Heart left ventricle (tissue), 16 donors: ENCODE measurements at regions of chr6 and their contacts with region 1.

Region 1: GRCh38 chr6:39791850-39792539 is at the start of gene DAAM2:
- DNase-seq: peak; percentile 71 to 85 (median 74)
- ATAC-seq: peak; percentile 63 to 92 (median 87)
- H3K4me3 ChIP-seq: peak within 1 kb of the TSS; percentile 43 to 84 (median 66)
- H3K27ac ChIP-seq: peak within 1 kb of the TSS in 11 of 12 donors; percentile 35 to 86 (median 78)
- H3K4me1 ChIP-seq: peaks cover 0 to 38% (median 11%) of the 10 kb centered on the region in 12 donors
- H3K27me3 ChIP-seq: peaks cover 0 to 23% (median 0%) of the 10 kb centered on the region in 9 donors
- CTCF ChIP-seq: peak in 5 of 12 donors; percentile 7 to 47 (median 27)
- POLR2A ChIP-seq: peak in 1 of 2 donors; percentile 74
- total RNA-seq, gene DAAM2: 11.5 to 20.9 (median 13.6) TPM

Region 2: DNA sequence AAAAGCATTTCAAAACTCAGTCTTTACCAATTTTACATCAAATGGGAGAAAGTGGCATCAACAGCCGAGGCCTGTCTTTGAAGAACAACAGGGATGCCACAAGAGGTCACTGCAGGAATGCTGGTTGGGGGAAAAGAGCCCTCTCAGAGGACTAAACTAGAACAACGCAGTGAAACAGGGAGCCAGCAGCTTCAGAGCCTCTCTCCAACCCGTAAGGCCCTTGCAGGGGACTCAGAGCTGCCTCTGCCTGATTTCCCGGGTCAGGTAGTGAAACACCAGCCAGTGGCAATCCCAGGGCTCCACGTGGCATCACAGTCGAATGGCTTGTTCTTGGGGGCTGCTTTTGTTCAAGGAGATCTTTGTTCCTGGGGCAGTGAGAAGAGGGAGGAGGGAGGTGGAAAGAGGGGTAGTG is 414.4 kb before region 1 on chr6:
- intact Hi-C with region 1: loop called in 1 of 10 experiments (anchors 10 kb)
- DNase-seq: peak in 4 of 5 donors; percentile 59 to 69 (median 62)
- ATAC-seq: peak; percentile 62 to 94 (median 88)
- H3K4me3 ChIP-seq: no peak overlapping the region
- H3K27ac ChIP-seq: no peak overlapping the region
- H3K4me1 ChIP-seq: peaks cover 0 to 10% (median 2%) of the 10 kb centered on the region in 12 donors
- H3K27me3 ChIP-seq: no peaks in the 10 kb centered on the region
- CTCF ChIP-seq: peak; percentile 35 to 77 (median 68)
- POLR2A ChIP-seq: no peak

Region 3: GRCh38 chr6:39496915-39497314 is 295.1 kb before region 1 on chr6:
- intact Hi-C with region 1: loop called in 1 of 10 experiments (anchors 10 kb)
- DNase-seq: peak in 4 of 5 donors; percentile 51 to 74 (median 59)
- ATAC-seq: peak; percentile 78 to 92 (median 82)
- H3K4me3 ChIP-seq: no peak overlapping the region
- H3K27ac ChIP-seq: peak overlapping the region in 3 of 12 donors; percentile 10 to 20 (median 11)
- H3K4me1 ChIP-seq: peaks cover 0 to 31% (median 5%) of the 10 kb centered on the region in 12 donors
- H3K27me3 ChIP-seq: peaks cover 0 to 2% (median 0%) of the 10 kb centered on the region in 9 donors
- CTCF ChIP-seq: no peak
- POLR2A ChIP-seq: no peak

Region 4: DNA sequence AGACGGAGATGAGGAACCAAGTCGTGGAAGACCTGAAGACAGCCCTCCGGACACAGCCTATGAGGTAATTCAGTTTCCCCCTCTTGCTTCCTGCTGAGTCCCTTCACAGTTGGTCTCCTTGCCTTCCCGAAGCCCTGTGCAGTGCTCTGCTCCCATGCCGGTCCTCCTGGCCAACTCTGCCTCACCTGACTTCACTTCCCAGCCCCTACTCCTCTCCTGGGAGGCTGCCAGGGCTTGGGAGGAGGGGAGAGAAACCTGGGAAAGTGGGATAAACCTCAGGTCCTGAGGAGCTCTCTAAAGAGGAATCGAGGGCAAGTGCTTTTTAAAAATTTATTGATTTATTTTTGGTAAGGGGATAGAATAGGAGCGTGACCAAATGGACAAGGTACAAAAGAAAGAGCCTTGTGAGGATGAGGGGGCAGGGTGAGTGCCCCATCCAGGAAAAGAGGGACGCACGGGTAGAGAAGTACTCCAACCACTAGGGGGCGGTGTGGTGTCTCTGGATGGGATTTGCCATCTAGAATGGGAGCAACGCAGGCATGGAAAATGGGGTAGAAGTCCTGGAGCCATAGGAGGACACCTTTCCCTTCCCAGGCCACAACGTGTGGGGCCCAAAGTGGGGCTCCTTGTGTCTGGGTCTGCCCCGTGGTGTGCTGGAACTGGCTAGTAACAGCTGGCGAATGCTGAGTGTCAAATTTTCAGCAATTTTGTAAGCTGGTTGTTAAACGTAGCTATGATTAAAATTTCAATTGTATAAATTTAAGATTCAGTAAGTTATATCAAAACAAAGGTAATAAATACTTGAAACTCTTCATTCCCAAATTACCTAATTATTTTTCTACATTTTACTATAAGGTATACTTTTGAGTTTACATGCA is 73.3 kb after region 1 on chr6:
- intact Hi-C with region 1: loop called in 1 of 10 experiments (anchors 5 kb)
- DNase-seq: peak; percentile 65 to 76 (median 73)
- ATAC-seq: peak in 3 of 4 donors; percentile 51 to 67 (median 60)
- H3K4me3 ChIP-seq: no peak overlapping the region
- H3K27ac ChIP-seq: no peak overlapping the region
- H3K4me1 ChIP-seq: peaks cover 0 to 16% (median 0%) of the 10 kb centered on the region in 12 donors
- H3K27me3 ChIP-seq: no peaks in the 10 kb centered on the region
- CTCF ChIP-seq: peak; percentile 57 to 87 (median 80)
- POLR2A ChIP-seq: no peak

Region 5: GRCh38 chr6:39882531-39882899 is 90.5 kb after region 1 on chr6:
- intact Hi-C with region 1: loop called in 5 of 10 experiments (anchors 5 to 10 kb)
- DNase-seq: peak in 4 of 5 donors; percentile 65 to 74 (median 71)
- ATAC-seq: peak; percentile 18 to 80 (median 63)
- H3K4me3 ChIP-seq: no peak overlapping the region
- H3K27ac ChIP-seq: peak overlapping the region in 11 of 12 donors; percentile 11 to 62 (median 51)
- H3K4me1 ChIP-seq: peaks cover 0 to 35% (median 21%) of the 10 kb centered on the region in 12 donors
- H3K27me3 ChIP-seq: no peaks in the 10 kb centered on the region
- CTCF ChIP-seq: no peak
- POLR2A ChIP-seq: no peak

Region 6: DNA sequence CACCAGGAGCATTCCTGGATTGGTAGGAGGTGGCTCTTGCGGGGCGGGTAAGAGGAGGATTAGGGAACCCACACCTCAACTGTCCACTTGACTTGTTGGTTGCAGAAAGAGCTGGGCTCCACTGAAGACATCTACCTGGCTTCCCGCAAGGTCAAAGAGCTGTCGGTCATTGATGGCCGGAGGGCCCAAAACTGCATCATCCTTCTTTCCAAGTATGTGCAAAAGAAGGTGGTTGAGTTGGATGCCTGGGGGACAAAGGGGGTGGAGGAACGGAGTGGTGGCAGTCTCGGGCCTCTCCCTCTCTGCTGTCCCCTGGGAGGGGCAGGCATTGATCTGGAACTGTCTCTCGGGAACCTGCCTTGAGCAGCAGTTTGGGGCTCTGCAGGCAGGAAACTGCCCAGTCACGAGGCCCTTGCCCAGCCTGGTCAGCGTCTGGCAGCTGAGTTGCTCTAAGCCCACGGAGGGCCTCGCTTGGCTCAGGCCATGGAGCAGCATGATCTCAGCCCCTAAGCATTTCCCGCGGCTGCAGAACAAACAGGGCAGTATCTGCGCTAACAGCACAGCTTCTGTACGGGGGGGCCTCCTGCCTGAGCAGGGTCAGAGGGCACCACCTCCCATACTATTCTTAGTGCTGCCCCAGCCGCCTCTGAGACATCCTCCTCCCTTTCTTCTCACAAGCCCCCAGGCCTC is 95.5 kb after region 1 on chr6:
- intact Hi-C with region 1: loop called in 6 of 10 experiments (anchors 5 to 10 kb)
- DNase-seq: peak; percentile 83 to 91 (median 88)
- ATAC-seq: peak; percentile 92 to 95 (median 93)
- H3K4me3 ChIP-seq: no peak overlapping the region
- H3K27ac ChIP-seq: peak overlapping the region; percentile 28 to 84 (median 71)
- H3K4me1 ChIP-seq: peaks cover 0 to 49% (median 31%) of the 10 kb centered on the region in 12 donors
- H3K27me3 ChIP-seq: no peaks in the 10 kb centered on the region
- CTCF ChIP-seq: no peak
- POLR2A ChIP-seq: no peak

Region 7: DNA sequence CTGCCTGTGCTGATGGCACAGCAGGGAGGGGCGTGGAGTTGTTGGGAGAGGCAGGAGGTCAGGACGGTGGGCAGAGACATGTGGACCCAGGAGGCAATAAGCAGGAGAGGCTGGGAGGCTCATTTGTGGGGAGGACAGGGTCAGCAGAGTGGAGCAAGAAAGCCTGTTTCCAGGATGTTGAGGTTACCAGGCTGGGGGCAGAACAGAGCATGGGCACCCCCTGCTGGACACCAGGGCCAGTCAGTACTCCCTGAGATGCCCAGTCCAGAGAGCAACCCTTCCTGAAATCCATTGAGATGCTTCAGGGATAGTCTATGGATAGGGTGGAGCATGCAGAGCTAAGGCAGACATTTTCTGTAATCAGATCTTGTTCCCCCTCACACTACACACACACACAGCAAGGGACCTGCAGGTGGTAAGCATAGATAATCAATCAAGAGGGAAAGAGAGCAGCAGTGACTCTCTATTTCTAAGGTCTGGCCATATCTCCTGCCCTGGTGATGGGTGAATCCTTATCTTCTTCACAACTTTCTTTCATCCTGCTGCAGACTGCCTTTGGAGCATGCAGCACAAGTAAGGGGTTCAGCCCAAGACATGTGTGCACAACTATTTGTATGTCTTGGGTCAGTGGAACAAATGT is 100.6 kb after region 1 on chr6:
- intact Hi-C with region 1: loop called in 5 of 10 experiments (anchors 5 to 10 kb)
- DNase-seq: peak in 4 of 5 donors; percentile 48 to 64 (median 61)
- ATAC-seq: peak; percentile 45 to 77 (median 70)
- H3K4me3 ChIP-seq: no peak overlapping the region
- H3K27ac ChIP-seq: no peak overlapping the region
- H3K4me1 ChIP-seq: peaks cover 0 to 26% (median 12%) of the 10 kb centered on the region in 12 donors
- H3K27me3 ChIP-seq: no peaks in the 10 kb centered on the region
- CTCF ChIP-seq: peak; percentile 53 to 75 (median 69)
- POLR2A ChIP-seq: no peak